CD4-positive, alpha-beta memory T cell (primary cell): ENCODE measurements at regions of chr9 and their contacts with region 1.

Region 1: DNA sequence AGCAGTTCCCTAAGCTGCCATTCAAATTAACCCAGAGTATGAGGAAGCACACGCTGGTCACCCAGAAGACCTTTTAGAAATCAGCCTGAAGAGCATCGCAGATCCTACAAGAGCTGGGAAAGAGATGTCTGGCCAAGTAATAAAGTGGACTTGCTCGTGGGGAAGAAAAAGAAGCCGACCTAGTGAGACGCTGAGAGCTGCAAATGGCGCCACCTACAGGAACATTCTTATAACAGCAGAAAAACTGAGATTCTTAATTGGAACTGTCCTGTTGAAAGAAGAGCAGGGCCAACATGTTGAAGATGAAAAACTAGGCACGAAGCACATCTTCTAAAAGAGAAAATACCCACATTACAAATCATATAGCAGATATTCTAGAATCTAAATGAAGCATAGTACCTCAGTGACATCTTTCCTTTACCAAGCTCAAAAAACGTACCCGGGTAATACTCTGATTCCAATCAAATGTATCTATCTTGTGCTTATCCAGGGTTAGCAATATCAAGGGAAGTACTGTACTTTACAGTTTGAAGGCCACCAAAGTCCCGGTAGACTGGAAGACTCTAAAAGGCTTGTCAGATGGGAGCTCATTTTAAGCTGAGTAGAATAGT is 3.9 kb upstream of the GNAQ start:
- DNase-seq: peak; percentile 61 to 75 (median 72)
- H3K4me3 ChIP-seq: no peak overlapping the region
- H3K4me3 Mint-ChIP-seq: peak overlapping the region in 4 of 8 donors; percentile 20 to 62 (median 34)
- H3K27ac ChIP-seq: no peak overlapping the region
- H3K27ac Mint-ChIP-seq: peak overlapping the region; percentile 6 to 91 (median 70)
- H3K4me1 ChIP-seq: peaks cover 34% of the 10 kb centered on the region
- H3K4me1 Mint-ChIP-seq: peaks cover 28 to 39% (median 33%) of the 10 kb centered on the region in 4 donors
- H3K27me3 ChIP-seq: no peaks in the 10 kb centered on the region
- H3K27me3 Mint-ChIP-seq: no peaks in the 10 kb centered on the region

Region 2: DNA sequence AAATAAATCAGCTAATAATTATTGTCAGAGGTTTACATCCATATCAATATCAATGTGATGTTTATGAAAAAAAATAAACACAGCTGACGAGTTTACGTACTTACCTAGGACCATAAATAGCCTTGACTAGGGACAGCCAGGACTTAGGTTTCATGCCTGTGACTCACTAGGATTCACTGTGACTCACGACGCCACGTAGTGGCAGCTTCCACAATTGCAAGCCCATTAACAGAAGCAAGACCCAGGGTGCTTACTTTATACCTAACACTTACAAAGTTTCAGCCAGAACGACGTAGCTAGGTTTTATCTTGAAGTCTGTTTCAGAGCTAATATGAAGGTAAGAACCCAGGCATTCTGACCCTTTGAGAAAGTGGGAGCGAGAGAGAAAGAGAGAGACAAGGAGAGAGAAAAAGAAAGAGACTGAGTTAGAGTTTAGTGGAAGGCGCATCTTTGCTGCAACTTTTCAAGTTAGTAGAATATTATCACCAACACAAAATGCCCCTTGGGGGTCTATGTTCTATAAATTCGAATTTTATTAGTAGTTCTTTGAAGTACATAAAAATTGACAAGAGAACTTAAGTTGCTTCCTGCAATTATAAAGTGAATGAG is 578.6 kb before region 1 on chr9:
- CTCF ChIA-PET with region 1: interaction called, 18 read pairs
- POLR2A ChIA-PET with region 1: no interaction called
- intact Hi-C with region 1: loop called (anchors 1 kb)
- DNase-seq: peak; percentile 65 to 74 (median 72)
- H3K4me3 ChIP-seq: no peak overlapping the region
- H3K4me3 Mint-ChIP-seq: no peak overlapping the region
- H3K27ac ChIP-seq: no peak overlapping the region
- H3K27ac Mint-ChIP-seq: no peak overlapping the region
- H3K4me1 ChIP-seq: no peaks in the 10 kb centered on the region
- H3K4me1 Mint-ChIP-seq: peaks cover 8 to 22% (median 14%) of the 10 kb centered on the region in 4 donors
- H3K27me3 ChIP-seq: no peaks in the 10 kb centered on the region
- H3K27me3 Mint-ChIP-seq: peaks cover 0 to 1% of the 10 kb centered on the region in 2 donors

Region 3: GRCh38 chr9:77909306-77909705 is 126.2 kb before region 1 on chr9:
- CTCF ChIA-PET with region 1: no interaction called
- POLR2A ChIA-PET with region 1: no interaction called
- intact Hi-C with region 1: loop called (anchors 5 kb)
- DNase-seq: peak; percentile 34 to 64 (median 50)
- H3K4me3 ChIP-seq: peak overlapping the region in 1 of 2 donors; percentile 12
- H3K4me3 Mint-ChIP-seq: peak overlapping the region in 7 of 8 donors; percentile 49 to 83 (median 73)
- H3K27ac ChIP-seq: peak overlapping the region; percentile 3
- H3K27ac Mint-ChIP-seq: peak overlapping the region; percentile 55 to 93 (median 87)
- H3K4me1 ChIP-seq: peaks cover 41% of the 10 kb centered on the region
- H3K4me1 Mint-ChIP-seq: peaks cover 37 to 56% (median 53%) of the 10 kb centered on the region in 4 donors
- H3K27me3 ChIP-seq: no peaks in the 10 kb centered on the region
- H3K27me3 Mint-ChIP-seq: no peaks in the 10 kb centered on the region

Region 4: DNA sequence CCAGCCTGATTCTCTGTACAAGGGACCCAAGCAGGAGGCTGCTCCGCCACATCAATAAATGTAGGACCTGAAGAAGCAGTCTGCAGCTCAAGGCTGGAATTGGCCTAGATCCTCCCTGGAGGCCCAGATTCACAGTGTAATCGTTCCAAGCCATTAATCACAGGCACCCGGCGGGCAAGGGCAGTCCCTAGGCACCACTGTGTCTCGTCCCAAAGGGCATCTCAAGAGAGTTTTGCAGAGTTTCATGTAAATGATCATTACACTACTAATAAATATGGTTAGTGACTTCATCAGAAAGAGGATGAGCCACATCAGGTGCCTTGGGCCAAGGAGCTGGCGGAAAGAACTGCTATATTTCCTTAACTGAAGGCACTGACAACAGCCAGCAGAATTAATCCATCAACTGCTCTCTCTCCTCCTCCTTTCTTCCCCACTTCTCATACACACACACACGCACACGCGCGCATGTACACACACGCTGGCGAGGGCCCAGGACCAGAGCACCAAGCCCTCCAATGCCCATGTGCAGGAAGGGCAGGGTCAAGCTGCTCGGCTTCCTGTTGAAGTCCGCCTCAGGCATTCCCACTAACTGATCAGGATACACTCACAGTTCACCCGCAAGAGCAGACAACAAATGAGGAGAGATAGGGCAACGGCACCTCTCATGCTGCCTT is 37.7 kb before region 1 on chr9:
- CTCF ChIA-PET with region 1: interaction called, 21 read pairs
- POLR2A ChIA-PET with region 1: interaction called, 3 read pairs
- intact Hi-C with region 1: no loop called
- DNase-seq: no peak
- H3K4me3 ChIP-seq: no peak overlapping the region
- H3K4me3 Mint-ChIP-seq: no peak overlapping the region
- H3K27ac ChIP-seq: no peak overlapping the region
- H3K27ac Mint-ChIP-seq: no peak overlapping the region
- H3K4me1 ChIP-seq: peaks cover 13% of the 10 kb centered on the region
- H3K4me1 Mint-ChIP-seq: peaks cover 35 to 61% (median 48%) of the 10 kb centered on the region in 4 donors
- H3K27me3 ChIP-seq: no peaks in the 10 kb centered on the region
- H3K27me3 Mint-ChIP-seq: no peaks in the 10 kb centered on the region

Region 5: DNA sequence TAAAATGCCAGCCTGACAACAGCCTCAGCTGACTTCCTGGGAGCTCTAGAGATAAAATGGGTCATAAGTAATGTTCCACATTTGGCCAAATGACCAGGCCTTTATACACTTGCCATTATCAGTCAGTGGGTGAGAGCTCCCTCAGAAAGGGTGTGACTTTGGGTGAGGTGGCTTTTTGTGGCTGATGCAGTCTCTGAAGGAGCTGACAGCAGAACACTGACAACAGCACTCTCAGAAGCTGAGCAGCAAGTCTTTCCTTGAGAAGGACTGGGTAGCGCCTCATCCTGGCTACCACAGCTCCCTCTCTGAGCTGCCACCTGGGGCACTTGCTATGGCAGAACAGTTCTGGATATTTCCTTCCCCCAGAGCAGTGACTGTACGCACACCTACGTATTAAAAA is 18.1 kb after region 1 on chr9:
- CTCF ChIA-PET with region 1: interaction called, 40 read pairs
- POLR2A ChIA-PET with region 1: interaction called, 3 read pairs
- intact Hi-C with region 1: no loop called
- DNase-seq: no peak
- H3K4me3 ChIP-seq: no peak overlapping the region
- H3K4me3 Mint-ChIP-seq: peak overlapping the region in 6 of 8 donors; percentile 20 to 82 (median 68)
- H3K27ac ChIP-seq: no peak overlapping the region
- H3K27ac Mint-ChIP-seq: peak overlapping the region in 3 of 7 donors; percentile 35 to 77 (median 67)
- H3K4me1 ChIP-seq: peaks cover 20% of the 10 kb centered on the region
- H3K4me1 Mint-ChIP-seq: peaks cover 14 to 32% (median 23%) of the 10 kb centered on the region in 4 donors
- H3K27me3 ChIP-seq: no peaks in the 10 kb centered on the region
- H3K27me3 Mint-ChIP-seq: no peaks in the 10 kb centered on the region

Region 6: GRCh38 chr9:78121488-78121887 is 86.0 kb after region 1 on chr9:
- CTCF ChIA-PET with region 1: interaction called, 47 read pairs
- POLR2A ChIA-PET with region 1: interaction called, 8 read pairs
- intact Hi-C with region 1: loop called (anchors 1 kb)
- DNase-seq: peak in 4 of 5 donors; percentile 44 to 56 (median 48)
- H3K4me3 ChIP-seq: no peak overlapping the region
- H3K4me3 Mint-ChIP-seq: no peak overlapping the region
- H3K27ac ChIP-seq: no peak overlapping the region
- H3K27ac Mint-ChIP-seq: peak overlapping the region; percentile 58 to 82 (median 69)
- H3K4me1 ChIP-seq: peaks cover 36% of the 10 kb centered on the region
- H3K4me1 Mint-ChIP-seq: peaks cover 30 to 53% (median 42%) of the 10 kb centered on the region in 4 donors
- H3K27me3 ChIP-seq: no peaks in the 10 kb centered on the region
- H3K27me3 Mint-ChIP-seq: no peaks in the 10 kb centered on the region